Activated T-helper 2 cell treated with anti-CD3 and anti-CD28 coated beads, Interferon-gamma antibody, Interleukin-2, Interleukin-4, amounts not matched to agents 10 μg/mL and 5 μg/mL and 100 μg/mL, durations not matched to agents 14 hours and 24 hours and 36 hours (primary cell): ENCODE measurements at regions of chr6 and their contacts with region 1.

Region 1: GRCh38 chr6:139540276-139540675 is 165.8 kb upstream of the CITED2 start:
- DNase-seq: peak; percentile 50
- H3K4me3 Mint-ChIP-seq: no peak overlapping the region
- H3K27ac Mint-ChIP-seq: peak overlapping the region; percentile 77
- H3K4me1 Mint-ChIP-seq: peaks cover 56% of the 10 kb centered on the region
- H3K27me3 Mint-ChIP-seq: no peaks in the 10 kb centered on the region

Region 2: GRCh38 chr6:139448051-139448649 is 92.1 kb before region 1 on chr6:
- intact Hi-C with region 1: loop called (anchors 10 kb)
- DNase-seq: no peak
- H3K4me3 Mint-ChIP-seq: no peak overlapping the region
- H3K27ac Mint-ChIP-seq: no peak overlapping the region
- H3K4me1 Mint-ChIP-seq: peaks cover 18% of the 10 kb centered on the region
- H3K27me3 Mint-ChIP-seq: no peaks in the 10 kb centered on the region

Region 3: GRCh38 chr6:139577763-139578604 is 37.7 kb after region 1 on chr6:
- intact Hi-C with region 1: loop called (anchors 5 kb)
- DNase-seq: no peak
- H3K4me3 Mint-ChIP-seq: no peak overlapping the region
- H3K27ac Mint-ChIP-seq: no peak overlapping the region
- H3K4me1 Mint-ChIP-seq: peaks cover 17% of the 10 kb centered on the region
- H3K27me3 Mint-ChIP-seq: peaks cover 2% of the 10 kb centered on the region

Region 4: DNA sequence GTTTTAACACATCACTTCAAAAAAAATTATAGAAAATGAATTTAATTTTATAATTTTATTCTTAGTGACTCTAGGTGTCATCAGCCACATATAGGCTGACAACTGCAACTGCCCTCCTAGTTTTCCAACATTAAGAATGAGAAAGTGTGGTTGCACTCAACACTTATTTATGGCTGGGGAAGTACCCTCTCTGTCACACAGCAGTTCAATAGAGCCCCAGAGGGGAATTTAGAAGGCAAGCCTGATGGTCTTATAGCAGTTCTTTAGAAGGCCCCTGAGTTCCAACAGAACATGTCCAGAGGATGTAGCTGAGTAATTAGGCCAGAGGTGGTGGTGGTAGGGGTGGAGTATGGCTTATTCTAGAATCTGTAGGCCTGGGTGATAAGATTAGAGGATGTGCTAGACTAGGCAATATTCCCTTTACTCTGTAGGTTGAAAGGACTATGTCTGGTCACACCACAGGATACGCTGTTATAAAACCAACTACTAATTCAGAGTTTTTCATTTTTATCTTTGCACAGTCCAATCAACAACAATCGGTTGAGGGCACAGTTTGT is 60.7 kb after region 1 on chr6:
- intact Hi-C with region 1: loop called (anchors 2 kb)
- DNase-seq: no peak
- H3K4me3 Mint-ChIP-seq: no peak overlapping the region
- H3K27ac Mint-ChIP-seq: peak overlapping the region; percentile 57
- H3K4me1 Mint-ChIP-seq: peaks cover 5% of the 10 kb centered on the region
- H3K27me3 Mint-ChIP-seq: peaks cover 1% of the 10 kb centered on the region